GM13977 (cell line): ENCODE measurements at regions of chr1 and their contacts with region 1.

Region 1: DNA sequence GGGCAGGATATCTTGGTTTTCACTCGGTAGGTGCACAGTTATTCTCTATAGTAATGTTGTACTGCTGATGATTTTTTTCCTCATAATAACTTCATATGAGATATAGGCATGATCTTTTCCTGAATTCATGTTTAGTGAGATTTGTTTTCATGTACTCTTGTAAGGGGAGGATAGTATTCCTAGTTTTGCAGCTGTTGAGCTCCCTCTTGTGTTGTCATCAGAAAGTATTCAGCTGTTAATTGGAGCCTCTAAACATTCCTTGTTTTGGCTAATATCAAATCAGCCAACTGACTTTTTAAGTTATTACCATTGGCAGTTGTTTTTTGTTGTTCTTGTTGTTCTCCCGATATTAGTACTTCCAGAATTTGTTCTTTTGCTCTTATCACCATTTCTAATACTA is 24.4 kb downstream of the OR10R2 start:
- DNase-seq: peak; percentile 7
- CTCF ChIP-seq: peak; percentile 46

Region 2: DNA sequence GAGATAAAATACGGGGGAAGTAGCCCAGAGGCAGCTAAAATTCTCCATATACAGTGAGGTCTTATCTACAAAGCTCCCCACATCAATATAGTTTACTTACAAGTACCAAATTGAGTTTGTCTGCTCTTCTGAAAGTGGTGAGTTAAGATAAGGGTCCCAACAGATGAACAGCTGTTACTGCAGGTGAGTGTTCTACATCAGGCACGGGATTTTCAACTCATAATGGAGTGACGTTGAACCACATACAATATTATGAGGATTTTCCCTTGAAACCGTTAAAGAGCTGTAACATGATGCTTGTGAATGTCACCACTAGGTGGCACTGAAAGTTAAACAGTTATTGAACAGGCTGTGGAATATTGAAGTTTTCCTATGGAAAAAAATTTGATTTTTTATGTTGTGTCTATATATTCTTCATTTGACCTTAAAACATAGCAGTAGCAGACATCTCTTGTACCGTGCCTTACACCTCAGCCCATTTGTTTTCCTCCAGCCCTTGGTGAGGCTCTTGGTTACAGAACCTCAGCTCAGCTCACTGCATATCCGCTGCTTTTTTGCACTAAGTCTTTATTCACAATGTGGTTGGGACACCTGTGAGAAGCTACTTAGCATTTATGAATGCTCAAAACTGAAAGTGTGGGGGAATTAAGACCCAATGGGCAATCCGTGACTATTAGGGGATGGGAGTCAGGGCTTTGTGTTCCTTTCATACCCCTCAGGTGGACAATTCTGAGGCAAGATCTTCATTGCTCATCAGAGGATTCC is 292.5 kb before region 1 on chr1:
- in situ Hi-C with region 1: loop called (anchors 25 kb)
- DNase-seq: peak; percentile 52
- CTCF ChIP-seq: peak; percentile 75